HepG2 (cell line): ENCODE measurements at regions of chr1 and their contacts with region 1.

Region 1: GRCh38 chr1:222589462-222590302 is at the start of gene TAF1A:
- DNase-seq: peak; percentile 89
- ATAC-seq: peak; percentile 100
- H3K4me3 ChIP-seq: peak within 1 kb of the TSS; percentile 77 to 93 (median 85)
- H3K27ac ChIP-seq: peak within 1 kb of the TSS; percentile 63
- H3K4me1 ChIP-seq: peaks cover 38% of the 10 kb centered on the region
- H3K27me3 ChIP-seq: no peaks in the 10 kb centered on the region; a peak in 1 of 5 replicates
- CTCF ChIP-seq: 0 out of 2 replicates have a peak, but pooled peaks have one; percentile 2
- EP300 ChIP-seq: 0 out of 4 replicates have a peak, but pooled peaks of 1 of the 2 experiments have one; percentile 12
- POLR2A ChIP-seq: peak; percentile 64 to 68
- RAD21 ChIP-seq: peak; percentile 12; the same call in 1 of the 2 replicates
- total RNA-seq, gene TAF1A: 10.7 and 15.9 TPM in 2 replicates

Region 2: DNA sequence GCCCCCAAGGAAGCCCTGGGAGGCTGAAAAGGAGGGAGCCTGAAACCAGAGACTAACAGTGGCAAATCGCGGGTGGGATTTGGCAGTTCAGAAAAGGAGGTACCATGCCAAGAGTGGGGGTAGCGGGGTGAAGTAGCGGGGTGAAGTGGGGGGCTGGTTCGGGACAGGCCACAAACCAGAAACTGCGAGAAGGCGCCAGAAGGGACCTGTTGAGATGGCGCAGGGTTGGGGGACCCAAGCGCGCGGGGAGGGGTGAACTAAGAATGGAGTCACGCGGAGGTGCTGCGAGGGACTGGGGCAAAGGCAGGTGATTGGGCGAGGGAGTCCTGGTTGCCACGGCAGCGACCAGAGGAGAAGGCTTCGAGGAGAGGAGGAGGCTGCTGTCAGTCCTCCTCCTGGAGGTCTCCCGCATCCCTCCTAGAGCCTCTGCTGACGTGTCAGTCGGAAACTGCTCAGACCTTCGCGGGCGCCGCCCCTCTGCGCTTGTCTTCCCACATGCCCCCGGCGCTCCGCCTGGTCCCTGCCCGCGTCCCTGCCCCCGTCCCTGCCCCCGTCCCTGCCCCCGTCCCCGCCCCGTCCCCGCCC is 27.8 kb after region 1 on chr1:
- CTCF ChIA-PET with region 1: no interaction called
- POLR2A ChIA-PET with region 1: no interaction called
- in situ Hi-C with region 1: no loop called
- intact Hi-C with region 1: loop called (anchors 2 kb)
- DNase-seq: peak; percentile 77
- ATAC-seq: peak; percentile 89
- H3K4me3 ChIP-seq: peak overlapping the region; percentile 33 to 74 (median 57); a peak in 5 of 6 replicates
- H3K27ac ChIP-seq: no peak overlapping the region
- H3K4me1 ChIP-seq: peaks cover 38% of the 10 kb centered on the region
- H3K27me3 ChIP-seq: no peaks in the 10 kb centered on the region; a peak in 1 of 5 replicates
- CTCF ChIP-seq: no peak
- EP300 ChIP-seq: no peak
- POLR2A ChIP-seq: peak; percentile 53 to 61; a peak in 3 of 4 replicates
- RAD21 ChIP-seq: no peak

Region 3: GRCh38 chr1:222643938-222644635 is 54.4 kb after region 1 on chr1:
- CTCF ChIA-PET with region 1: no interaction called
- POLR2A ChIA-PET with region 1: interaction called, 17 read pairs
- in situ Hi-C with region 1: no loop called
- intact Hi-C with region 1: loop called (anchors 1 kb)
- DNase-seq: peak; percentile 98
- ATAC-seq: peak; percentile 96
- H3K4me3 ChIP-seq: peak overlapping the region; percentile 73 to 92 (median 88)
- H3K27ac ChIP-seq: peak overlapping the region; percentile 93
- H3K4me1 ChIP-seq: peaks cover 18% of the 10 kb centered on the region
- H3K27me3 ChIP-seq: no peaks in the 10 kb centered on the region; a peak in 1 of 5 replicates
- CTCF ChIP-seq: no peak; the same call in 1 of the 2 replicates
- EP300 ChIP-seq: peak in 1 of 2 experiments; percentile 47; a peak in 2 of 4 replicates
- POLR2A ChIP-seq: peak; percentile 52 to 92
- RAD21 ChIP-seq: no peak

Region 4: DNA sequence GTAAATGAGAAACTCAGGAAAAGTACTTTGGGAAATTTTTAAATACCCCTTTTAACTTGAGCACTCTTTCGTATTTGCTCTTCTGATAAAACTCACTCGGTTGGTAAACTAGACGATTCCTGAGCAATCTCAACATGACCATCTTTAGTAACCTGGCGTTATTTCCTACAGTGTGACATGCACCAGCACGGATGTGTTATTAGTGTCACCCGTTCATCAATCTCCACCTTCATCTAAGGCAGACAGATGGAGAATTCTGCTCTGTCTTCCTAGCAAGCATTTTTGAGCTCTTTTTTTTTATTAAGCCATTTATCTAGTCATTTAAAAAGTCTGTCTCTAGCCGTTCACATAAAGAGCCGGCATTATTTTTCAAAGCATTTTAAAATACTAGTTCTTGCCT is 380.4 kb after region 1 on chr1:
- CTCF ChIA-PET with region 1: no interaction called
- POLR2A ChIA-PET with region 1: no interaction called
- in situ Hi-C with region 1: no loop called
- intact Hi-C with region 1: no loop called
- DNase-seq: no peak
- ATAC-seq: no peak
- H3K4me3 ChIP-seq: no peak overlapping the region
- H3K27ac ChIP-seq: no peak overlapping the region
- H3K4me1 ChIP-seq: no peaks in the 10 kb centered on the region
- H3K27me3 ChIP-seq: no peaks in the 10 kb centered on the region
- CTCF ChIP-seq: no peak
- EP300 ChIP-seq: no peak
- POLR2A ChIP-seq: no peak
- RAD21 ChIP-seq: no peak